H1 (cell line): ENCODE measurements at regions of chr19 and their contacts with region 1.

Region 1: DNA sequence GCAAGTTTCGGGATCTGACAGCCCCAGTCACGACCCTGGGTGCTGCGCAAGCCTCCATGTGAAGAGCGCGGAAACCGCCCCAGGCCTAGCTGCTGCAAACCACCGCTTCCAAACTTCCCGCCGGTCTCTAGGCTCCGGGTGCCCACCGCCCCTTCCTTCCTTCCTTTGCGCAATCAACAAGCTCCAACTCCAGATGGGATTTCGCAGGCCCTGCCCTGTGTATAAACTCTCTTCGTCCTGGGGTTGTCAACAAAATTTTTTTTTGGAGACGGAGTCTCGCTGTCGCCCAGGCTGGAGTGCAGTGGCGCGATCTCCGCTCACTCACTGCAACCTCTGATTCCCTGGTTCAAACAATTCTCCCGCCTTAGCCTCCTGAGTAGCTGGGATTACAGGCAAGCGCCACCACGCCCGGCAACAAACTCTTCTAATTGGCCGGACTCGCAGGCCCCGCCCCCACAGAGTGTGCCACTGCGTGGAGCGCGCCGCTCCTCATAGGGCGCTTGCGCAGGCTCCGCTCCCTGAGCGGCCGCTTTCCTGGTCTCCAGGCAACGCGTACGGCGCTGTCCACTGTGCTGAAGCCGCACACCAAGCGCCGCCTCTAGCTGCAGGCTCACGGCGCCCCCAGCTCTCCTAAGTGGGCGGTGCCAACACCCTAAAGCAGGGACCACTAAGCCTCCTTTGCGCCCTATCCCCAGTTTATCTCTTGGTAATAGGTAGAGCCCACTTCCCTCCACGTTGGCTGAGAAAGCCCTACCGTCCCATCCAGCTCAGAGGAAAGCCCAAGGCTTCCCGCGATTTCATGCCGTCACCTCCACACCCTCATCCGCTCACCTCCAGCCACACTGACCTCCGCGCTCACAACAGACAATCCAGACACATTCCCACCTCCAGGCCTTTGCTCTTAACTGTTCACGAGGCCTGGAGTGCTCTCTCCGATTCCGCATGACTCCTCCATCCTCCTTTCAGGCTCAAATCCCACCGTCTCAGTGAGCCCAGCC is 5.5 kb upstream of the QTRT1 start:
- DNase-seq: peak; percentile 94 to 96
- H3K4me3 ChIP-seq: peak overlapping the region in 3 of 4 experiments; percentile 19 to 49 (median 34); a peak in 6 of 8 replicates
- H3K27ac ChIP-seq: no peak overlapping the region
- H3K4me1 ChIP-seq: peaks cover 0 to 6% (median 1%) of the 10 kb centered on the region in 4 experiments; a peak in 4 of 7 replicates
- H3K27me3 ChIP-seq: no peaks in the 10 kb centered on the region
- CTCF ChIP-seq: 0 out of 4 replicates have a peak, but pooled peaks of 1 of the 3 experiments have one; percentile 4
- EP300 ChIP-seq: peak in 1 of 2 experiments; percentile 18; a peak in 1 of 3 replicates
- POLR2A ChIP-seq: peak in 1 of 2 experiments; percentile 35; a peak in 1 of 3 replicates
- RAD21 ChIP-seq: no peak

Region 2: DNA sequence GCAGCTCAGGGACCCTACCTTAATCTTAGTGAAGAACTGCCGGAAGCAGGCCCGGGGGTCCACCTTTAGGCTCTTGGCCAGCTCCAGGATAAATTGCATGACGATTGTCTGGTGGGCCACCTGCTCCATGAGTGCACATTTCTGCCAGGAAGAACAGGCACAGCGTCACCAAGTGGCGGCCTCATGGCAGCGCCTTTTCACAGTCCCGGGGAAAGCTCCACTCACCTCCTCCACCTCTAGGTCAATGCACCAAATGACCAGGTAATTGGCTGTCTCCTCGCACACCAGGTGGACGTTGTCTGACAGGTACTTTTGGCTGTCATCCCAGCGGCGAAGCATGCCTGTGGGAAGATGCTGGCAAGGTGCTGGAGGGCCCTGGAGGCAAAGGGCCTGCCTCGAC is 300.7 kb before region 1 on chr19:
- CTCF ChIA-PET with region 1: no interaction called
- POLR2A ChIA-PET with region 1: no interaction called
- DNase-seq: no peak
- H3K4me3 ChIP-seq: no peak overlapping the region
- H3K27ac ChIP-seq: no peak overlapping the region
- H3K4me1 ChIP-seq: peaks cover 0 to 2% (median 0%) of the 10 kb centered on the region in 4 experiments; a peak in 1 of 7 replicates
- H3K27me3 ChIP-seq: no peaks in the 10 kb centered on the region
- CTCF ChIP-seq: peak in 2 of 3 experiments; percentile 11 to 15; a peak in 2 of 4 replicates
- EP300 ChIP-seq: no peak
- POLR2A ChIP-seq: no peak
- RAD21 ChIP-seq: no peak

Region 3: GRCh38 chr19:10478903-10479384 is 216.8 kb before region 1 on chr19:
- CTCF ChIA-PET with region 1: interaction called, 11 read pairs
- POLR2A ChIA-PET with region 1: no interaction called
- DNase-seq: peak; percentile 80 to 89
- H3K4me3 ChIP-seq: peak overlapping the region in 1 of 4 experiments; percentile 36; a peak in 2 of 8 replicates
- H3K27ac ChIP-seq: no peak overlapping the region
- H3K4me1 ChIP-seq: peaks cover 0 to 4% (median 0%) of the 10 kb centered on the region in 4 experiments; a peak in 2 of 7 replicates
- H3K27me3 ChIP-seq: peaks cover 6 to 11% (median 9%) of the 10 kb centered on the region in 4 experiments
- CTCF ChIP-seq: peak; percentile 43 to 61 (median 51)
- EP300 ChIP-seq: no peak
- POLR2A ChIP-seq: no peak
- RAD21 ChIP-seq: peak in 1 of 2 experiments; percentile 36; a peak in 2 of 4 replicates

Region 4: DNA sequence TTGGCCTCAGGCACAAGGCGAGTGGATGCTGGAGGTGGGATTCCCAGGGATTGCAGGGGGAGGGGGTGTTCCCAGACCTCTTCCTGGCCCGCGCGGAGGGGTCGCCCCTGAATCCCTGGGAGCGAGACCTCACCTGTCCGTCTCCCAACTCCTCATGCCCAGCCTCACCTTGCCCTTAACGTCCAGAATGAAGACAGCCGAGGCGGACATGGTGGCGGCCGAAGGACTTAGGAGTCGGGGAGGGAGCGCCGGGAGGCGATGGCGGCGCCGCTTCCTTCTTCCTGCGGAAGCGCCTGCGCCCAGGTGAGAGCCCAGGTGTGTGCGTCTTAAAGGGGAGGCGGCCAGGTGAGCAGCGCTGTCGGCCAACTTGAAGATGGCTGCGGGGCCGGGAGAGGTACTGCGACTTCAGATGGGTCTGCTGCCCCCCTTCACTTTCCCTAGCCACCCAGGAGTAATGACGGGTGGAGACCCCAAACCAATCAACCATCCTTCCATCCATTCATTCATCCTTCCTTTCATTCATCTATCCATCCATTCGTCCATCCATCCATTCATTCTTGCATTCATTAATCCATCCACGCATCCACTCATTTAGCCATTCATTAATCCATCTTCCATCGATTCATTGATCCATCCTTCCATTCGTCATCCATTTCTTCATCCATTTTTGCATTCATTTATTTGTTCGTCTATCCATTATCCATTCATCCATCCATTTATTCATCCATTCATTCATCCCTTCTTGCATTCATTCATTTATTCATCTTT is 108.5 kb before region 1 on chr19 and contains the start of gene AP1M2:
- CTCF ChIA-PET with region 1: interaction called, 64 read pairs
- POLR2A ChIA-PET with region 1: interaction called, 7 read pairs
- DNase-seq: peak; percentile 53 to 79
- H3K4me3 ChIP-seq: peak within 1 kb of the TSS; percentile 84 to 97 (median 91)
- H3K27ac ChIP-seq: no peak within 1 kb of the TSS; the same call in 1 of the 2 replicates
- H3K4me1 ChIP-seq: no peaks in the 10 kb centered on the region
- H3K27me3 ChIP-seq: peaks cover 0 to 2% (median 0%) of the 10 kb centered on the region in 4 experiments; a peak in 1 of 7 replicates
- CTCF ChIP-seq: no peak
- EP300 ChIP-seq: no peak
- POLR2A ChIP-seq: no peak
- RAD21 ChIP-seq: peak in 1 of 2 experiments; percentile 9; a peak in 1 of 4 replicates
- total RNA-seq, gene AP1M2: 140 and 141 TPM in 2 replicates

Region 5: DNA sequence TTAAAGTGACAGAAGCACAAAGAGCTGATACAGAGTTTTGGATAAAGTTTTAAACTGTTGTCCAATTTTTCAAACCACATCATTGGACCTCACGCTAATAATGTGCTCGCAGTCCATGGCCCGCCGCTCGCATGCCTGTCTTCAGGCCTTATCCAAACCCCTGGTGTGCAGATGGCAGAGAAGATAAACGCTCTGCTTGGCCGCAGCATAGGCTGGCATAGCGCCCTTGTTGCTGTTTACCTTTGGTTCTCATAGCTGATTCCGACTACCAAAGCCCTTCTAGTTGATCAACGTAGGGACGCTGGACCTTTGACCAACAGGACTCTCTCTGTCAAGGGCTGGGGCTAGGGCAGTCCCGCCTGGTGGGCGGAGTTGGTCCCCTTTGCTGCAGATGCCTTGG is 17.9 kb before region 1 on chr19:
- CTCF ChIA-PET with region 1: interaction called, 13 read pairs
- POLR2A ChIA-PET with region 1: interaction called, 1,874 read pairs
- DNase-seq: no peak
- H3K4me3 ChIP-seq: no peak overlapping the region
- H3K27ac ChIP-seq: no peak overlapping the region
- H3K4me1 ChIP-seq: no peaks in the 10 kb centered on the region; a peak in 2 of 7 replicates
- H3K27me3 ChIP-seq: no peaks in the 10 kb centered on the region
- CTCF ChIP-seq: no peak
- EP300 ChIP-seq: no peak
- POLR2A ChIP-seq: no peak; a peak in 1 of 3 replicates
- RAD21 ChIP-seq: no peak

Region 6: GRCh38 chr19:10712045-10712444 is 16.3 kb after region 1 on chr19:
- CTCF ChIA-PET with region 1: interaction called, 7 read pairs
- POLR2A ChIA-PET with region 1: interaction called, 1,874 read pairs
- DNase-seq: peak in 1 of 2 experiments; percentile 66
- H3K4me3 ChIP-seq: no peak overlapping the region
- H3K27ac ChIP-seq: no peak overlapping the region
- H3K4me1 ChIP-seq: no peaks in the 10 kb centered on the region
- H3K27me3 ChIP-seq: no peaks in the 10 kb centered on the region
- CTCF ChIP-seq: peak; percentile 44 to 73 (median 55)
- EP300 ChIP-seq: no peak
- POLR2A ChIP-seq: no peak
- RAD21 ChIP-seq: peak; percentile 47 to 65; a peak in 3 of 4 replicates

Region 7: GRCh38 chr19:10769533-10770491 is 74.1 kb after region 1 on chr19:
- CTCF ChIA-PET with region 1: interaction called, 19 read pairs
- POLR2A ChIA-PET with region 1: interaction called, 4 read pairs
- DNase-seq: no peak
- H3K4me3 ChIP-seq: no peak overlapping the region
- H3K27ac ChIP-seq: no peak overlapping the region; the same call in 1 of the 2 replicates
- H3K4me1 ChIP-seq: peaks cover 0 to 6% (median 1%) of the 10 kb centered on the region in 4 experiments; a peak in 1 of 7 replicates
- H3K27me3 ChIP-seq: no peaks in the 10 kb centered on the region
- CTCF ChIP-seq: peak in 2 of 3 experiments; percentile 15 to 18; a peak in 2 of 4 replicates
- EP300 ChIP-seq: no peak
- POLR2A ChIP-seq: no peak
- RAD21 ChIP-seq: peak; percentile 50 to 57